Sigmoid colon (tissue), 7 donors: ENCODE measurements at regions of chr16 and their contacts with region 1.

Region 1: GRCh38 chr16:74064120-74064735 is 232.4 kb upstream of the PSMD7 start:
- DNase-seq: no peak
- H3K4me3 ChIP-seq: no peak overlapping the region
- H3K27ac ChIP-seq: no peak overlapping the region
- H3K4me1 ChIP-seq: no peaks in the 10 kb centered on the region
- H3K27me3 ChIP-seq: no peaks in the 10 kb centered on the region
- CTCF ChIP-seq: peak in 1 of 4 experiments; percentile 16
- EP300 ChIP-seq: no peak
- POLR2A ChIP-seq: no peak

Region 2: DNA sequence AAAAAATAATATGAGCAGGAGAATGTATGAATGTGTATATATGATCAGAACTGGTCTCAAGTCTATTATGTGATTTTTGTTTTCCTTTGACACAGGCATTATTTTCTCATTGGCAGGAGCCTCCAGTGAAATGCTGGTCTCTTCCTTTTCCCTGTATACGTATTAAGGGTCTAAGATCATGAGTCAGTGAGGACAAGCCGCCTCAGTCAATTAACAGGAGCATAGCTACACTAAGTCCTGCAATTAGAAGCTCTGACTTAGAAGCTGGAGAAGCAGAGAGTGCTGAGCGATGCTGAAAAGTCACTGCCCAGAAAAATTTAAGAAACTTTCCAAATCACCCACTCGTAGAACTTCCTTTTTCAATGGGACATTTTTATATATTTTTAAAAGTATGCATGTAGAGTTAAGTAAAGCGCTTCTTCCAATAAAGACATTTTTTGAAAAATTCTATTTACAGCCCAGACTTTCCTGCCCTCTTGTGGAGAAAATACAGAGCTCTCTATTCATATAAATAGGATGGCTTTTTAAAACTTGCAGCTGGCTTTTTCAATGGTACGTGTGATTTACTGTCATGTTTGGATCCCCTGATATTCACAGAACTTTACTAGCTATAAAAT is 162.2 kb after region 1 on chr16:
- intact Hi-C with region 1: loop called (anchors 5 kb)
- DNase-seq: no peak
- H3K4me3 ChIP-seq: no peak overlapping the region
- H3K27ac ChIP-seq: no peak overlapping the region
- H3K4me1 ChIP-seq: peaks cover 0 to 11% (median 7%) of the 10 kb centered on the region in 4 donors
- H3K27me3 ChIP-seq: no peaks in the 10 kb centered on the region
- CTCF ChIP-seq: peak in 3 of 4 experiments; percentile 18 to 47 (median 31)
- EP300 ChIP-seq: no peak
- POLR2A ChIP-seq: no peak

Region 3: DNA sequence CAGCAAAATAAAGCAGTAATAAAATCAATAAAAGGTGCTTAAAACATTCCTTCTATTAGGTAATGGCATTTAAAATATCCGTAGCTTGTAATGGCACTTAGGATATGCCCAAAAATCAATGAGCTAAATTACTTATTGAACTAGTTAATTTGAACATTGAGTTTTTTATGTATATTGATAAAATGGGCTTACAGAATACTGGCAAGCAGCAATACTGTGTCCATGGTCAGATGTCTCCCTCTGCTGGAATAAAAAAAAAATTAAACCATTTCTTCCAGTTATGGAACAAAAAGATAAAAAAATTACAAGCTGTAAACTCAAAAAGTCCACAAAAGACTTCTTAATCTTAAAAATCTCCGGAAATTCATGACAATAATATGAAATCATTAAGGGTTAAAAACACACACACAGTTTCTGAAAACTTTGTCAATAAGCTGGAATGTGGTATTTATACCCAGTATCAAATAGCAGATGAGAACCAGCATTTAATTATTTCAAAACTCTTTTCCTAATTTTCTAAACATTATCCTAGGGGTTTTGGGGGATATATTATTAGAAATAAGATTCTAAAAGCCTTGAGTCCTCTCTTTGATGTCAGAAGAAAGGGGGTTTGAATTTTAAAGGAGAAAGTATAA is 210.9 kb after region 1 on chr16:
- intact Hi-C with region 1: loop called (anchors 5 kb)
- DNase-seq: no peak
- H3K4me3 ChIP-seq: no peak overlapping the region
- H3K27ac ChIP-seq: no peak overlapping the region
- H3K4me1 ChIP-seq: no peaks in the 10 kb centered on the region
- H3K27me3 ChIP-seq: no peaks in the 10 kb centered on the region
- CTCF ChIP-seq: peak in 1 of 4 experiments; percentile 40
- EP300 ChIP-seq: no peak
- POLR2A ChIP-seq: no peak